Endothelial cell of umbilical vein (primary cell): ENCODE measurements at regions of chr3 and their contacts with region 1.

Region 1: GRCh38 chr3:45688882-45689756 is at the start of gene SACM1L:
- DNase-seq: peak; percentile 99
- H3K4me3 ChIP-seq: peak within 1 kb of the TSS; percentile 90 to 97 (median 94)
- H3K27ac ChIP-seq: peak within 1 kb of the TSS; percentile 77
- H3K4me1 ChIP-seq: peaks cover 33% of the 10 kb centered on the region
- H3K27me3 ChIP-seq: no peaks in the 10 kb centered on the region
- CTCF ChIP-seq: no peak
- POLR2A ChIP-seq: peak; percentile 79
- total RNA-seq, gene SACM1L: 35.4 and 39.9 TPM in 2 replicates

Region 2: DNA sequence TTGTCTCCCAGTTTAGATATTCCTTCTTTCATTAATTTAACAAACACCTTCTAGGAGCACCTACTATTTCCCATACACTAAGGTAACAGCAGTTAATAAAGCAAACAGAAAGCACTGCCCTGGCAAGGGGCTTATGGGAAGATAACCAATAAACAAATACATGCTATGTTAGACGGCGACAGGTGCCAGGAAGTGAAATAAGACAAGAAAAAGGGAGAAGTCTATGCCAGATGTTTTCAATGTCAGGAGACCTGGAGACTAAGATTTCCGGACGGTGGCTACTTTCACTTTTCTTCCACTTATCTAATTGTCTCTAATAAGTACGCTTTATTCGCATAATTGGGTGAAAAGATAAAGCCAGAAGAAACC is 1179.1 kb before region 1 on chr3:
- CTCF ChIA-PET with region 1: no interaction called
- POLR2A ChIA-PET with region 1: no interaction called
- dilution Hi-C with region 1: no loop called
- intact Hi-C with region 1: loop called (anchors 10 kb)
- DNase-seq: peak; percentile 49
- H3K4me3 ChIP-seq: peak overlapping the region; percentile 80 to 98 (median 88)
- H3K27ac ChIP-seq: peak overlapping the region; percentile 58
- H3K4me1 ChIP-seq: peaks cover 13% of the 10 kb centered on the region
- H3K27me3 ChIP-seq: no peaks in the 10 kb centered on the region
- CTCF ChIP-seq: no peak
- POLR2A ChIP-seq: no peak

Region 3: GRCh38 chr3:45224824-45225464 is 464.2 kb before region 1 on chr3:
- CTCF ChIA-PET with region 1: interaction called, 5 read pairs
- POLR2A ChIA-PET with region 1: no interaction called
- dilution Hi-C with region 1: no loop called
- intact Hi-C with region 1: loop called (anchors 2 kb)
- DNase-seq: peak; percentile 64
- H3K4me3 ChIP-seq: peak overlapping the region; percentile 12 to 76 (median 45)
- H3K27ac ChIP-seq: no peak overlapping the region
- H3K4me1 ChIP-seq: peaks cover 10% of the 10 kb centered on the region
- H3K27me3 ChIP-seq: peaks cover 20 to 42% of the 10 kb centered on the region in 2 experiments
- CTCF ChIP-seq: peak; percentile 52 to 72
- POLR2A ChIP-seq: no peak

Region 4: GRCh38 chr3:45258317-45258716 is 430.8 kb before region 1 on chr3:
- CTCF ChIA-PET with region 1: no interaction called
- POLR2A ChIA-PET with region 1: no interaction called
- dilution Hi-C with region 1: no loop called
- intact Hi-C with region 1: no loop called
- DNase-seq: no peak
- H3K4me3 ChIP-seq: no peak overlapping the region
- H3K27ac ChIP-seq: no peak overlapping the region
- H3K4me1 ChIP-seq: no peaks in the 10 kb centered on the region
- H3K27me3 ChIP-seq: peaks cover 6 to 14% of the 10 kb centered on the region in 2 experiments
- CTCF ChIP-seq: no peak
- POLR2A ChIP-seq: no peak

Region 5: GRCh38 chr3:45665101-45665572 is 24.0 kb before region 1 on chr3:
- CTCF ChIA-PET with region 1: interaction called, 18 read pairs
- POLR2A ChIA-PET with region 1: interaction called, 4 read pairs
- dilution Hi-C with region 1: no loop called
- intact Hi-C with region 1: loop called (anchors 1 kb)
- DNase-seq: peak; percentile 78
- H3K4me3 ChIP-seq: no peak overlapping the region
- H3K27ac ChIP-seq: peak overlapping the region; percentile 70
- H3K4me1 ChIP-seq: peaks cover 49% of the 10 kb centered on the region
- H3K27me3 ChIP-seq: no peaks in the 10 kb centered on the region
- CTCF ChIP-seq: peak; percentile 61 to 73
- POLR2A ChIP-seq: no peak